Left cardiac atrium (tissue), 4 donors: ENCODE measurements at regions of chr18 and their contacts with region 1.

Region 1: GRCh38 chr18:75574187-75574586 is 146.7 kb upstream of the SMIM21 start:
- DNase-seq: no peak
- ATAC-seq: no peak

Region 2: DNA sequence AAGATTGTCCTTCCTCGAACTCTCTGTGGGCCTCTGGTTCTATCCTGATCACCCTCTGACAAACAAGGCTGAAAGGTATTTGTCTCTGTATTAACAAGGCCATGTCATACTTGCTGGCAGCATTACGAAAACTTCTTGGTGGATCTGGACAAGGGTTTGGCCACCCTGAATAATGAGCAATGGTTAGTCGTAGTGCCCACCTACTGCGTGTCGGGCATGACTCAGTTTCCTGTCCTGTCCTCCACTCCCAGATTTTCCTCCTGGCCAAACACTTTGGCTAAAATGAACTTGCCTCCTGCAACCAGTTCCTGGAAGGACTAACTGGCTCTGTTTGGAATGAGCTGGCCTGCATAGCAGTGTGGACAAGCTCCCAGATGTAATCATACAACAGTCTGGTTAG is 51.8 kb after region 1 on chr18:
- intact Hi-C with region 1: loop called in 1 of 2 experiments (anchors 10 kb)
- DNase-seq: no peak
- ATAC-seq: no peak